SK-N-SH (cell line): ENCODE measurements at regions of chr9 and their contacts with region 1.

Region 1: DNA sequence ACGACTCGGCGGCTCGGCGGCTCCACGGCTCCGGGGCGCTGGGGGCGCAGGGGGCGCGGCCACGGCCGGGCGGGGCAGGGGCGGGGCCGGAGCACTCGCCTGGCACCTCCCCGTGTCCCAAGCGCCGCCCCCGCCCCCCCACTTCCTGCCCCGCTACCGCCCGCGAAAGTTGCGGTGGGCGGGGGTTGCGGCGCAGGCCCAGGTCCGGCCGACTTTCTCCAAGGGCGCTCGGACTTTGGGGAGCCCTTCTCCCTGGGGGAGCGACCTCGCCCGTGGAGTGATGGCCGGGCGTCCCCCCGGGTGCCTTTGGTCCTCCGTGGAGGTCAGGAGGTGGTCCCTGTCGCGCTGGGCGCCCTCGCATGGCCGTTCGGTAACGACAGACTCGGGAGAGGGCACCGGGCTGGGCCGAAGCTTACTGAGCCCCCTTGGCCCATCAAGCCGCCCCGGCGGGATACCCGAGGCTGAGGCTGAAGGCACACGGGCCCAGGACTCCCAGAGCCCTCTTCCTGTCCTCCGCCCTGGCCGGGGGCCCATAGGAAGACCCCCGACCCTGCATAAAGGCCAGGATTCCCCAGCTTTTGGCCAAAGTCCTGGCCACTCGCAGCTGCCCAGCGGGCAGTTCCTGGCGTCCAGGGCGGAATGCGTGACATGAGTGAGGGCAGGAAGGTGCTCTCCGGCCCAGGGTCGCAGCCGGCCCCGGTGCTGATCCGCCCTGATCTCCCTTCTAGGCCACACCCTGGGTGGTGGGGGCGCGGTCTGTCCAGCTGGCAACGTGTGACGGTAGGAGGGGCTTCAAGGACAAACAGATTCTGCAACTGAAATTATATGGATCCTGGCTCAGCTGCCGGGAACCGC is 883 bp upstream of the VAV2 start:
- DNase-seq: peak; percentile 94
- H3K4me3 ChIP-seq: peak overlapping the region; percentile 75 to 87
- H3K27ac ChIP-seq: peak overlapping the region; percentile 82 to 93
- H3K4me1 ChIP-seq: peaks cover 6 to 34% of the 10 kb centered on the region in 2 experiments; a peak in 3 of 4 replicates
- H3K27me3 ChIP-seq: no peaks in the 10 kb centered on the region
- CTCF ChIP-seq: peak; percentile 63
- EP300 ChIP-seq: no peak
- RAD21 ChIP-seq: peak; percentile 50

Region 2: DNA sequence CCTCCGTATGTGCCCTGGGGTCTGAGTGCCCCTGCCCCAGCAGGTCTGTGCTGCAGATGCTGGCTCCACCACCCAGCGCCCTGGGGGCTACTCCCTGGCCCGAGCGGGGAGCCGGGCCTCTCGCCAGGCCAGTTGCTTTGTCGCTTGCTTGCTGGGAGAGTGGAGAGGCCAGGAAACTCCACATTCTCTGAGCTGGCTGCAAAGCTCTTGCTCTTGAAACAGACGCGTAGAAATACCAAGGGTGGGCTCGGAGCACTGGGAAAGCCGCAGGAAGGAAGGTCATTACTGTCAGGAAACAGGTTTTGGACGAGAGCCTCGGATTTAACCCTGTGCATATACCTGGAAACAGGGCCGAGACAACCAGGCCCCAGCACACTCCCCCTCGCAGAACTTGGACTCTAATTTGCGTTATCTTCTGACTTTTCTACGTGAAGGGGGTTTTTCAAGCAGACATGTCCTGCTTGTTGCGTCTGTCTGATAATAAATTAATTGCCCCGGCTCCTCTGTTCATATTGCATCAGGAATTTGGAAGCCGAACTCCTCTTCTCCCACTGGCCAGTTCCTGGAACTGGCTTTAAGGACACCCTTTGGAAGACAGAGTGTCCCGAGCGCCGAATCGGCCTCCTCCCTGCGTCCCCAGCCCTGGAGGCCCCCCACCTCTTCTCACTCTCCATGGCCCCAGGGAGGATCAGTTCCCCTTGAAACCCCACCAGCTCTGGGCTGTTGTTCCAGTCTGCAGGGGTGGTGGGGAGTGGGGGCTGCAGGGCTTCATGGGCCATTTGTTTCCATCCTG is 447.3 kb before region 1 on chr9:
- CTCF ChIA-PET with region 1: no interaction called
- POLR2A ChIA-PET with region 1: no interaction called
- DNase-seq: peak; percentile 79
- H3K4me3 ChIP-seq: no peak overlapping the region
- H3K27ac ChIP-seq: peak overlapping the region in 1 of 2 experiments; percentile 80; a peak in 2 of 4 replicates
- H3K4me1 ChIP-seq: peaks cover 0 to 28% of the 10 kb centered on the region in 2 experiments; a peak in 1 of 4 replicates
- H3K27me3 ChIP-seq: no peaks in the 10 kb centered on the region
- CTCF ChIP-seq: no peak
- EP300 ChIP-seq: no peak
- RAD21 ChIP-seq: no peak

Region 3: GRCh38 chr9:133782157-133783130 is 210.6 kb before region 1 on chr9:
- CTCF ChIA-PET with region 1: interaction called, 236 read pairs
- POLR2A ChIA-PET with region 1: no interaction called
- DNase-seq: peak; percentile 90
- H3K4me3 ChIP-seq: no peak overlapping the region; a peak in 1 of 4 replicates
- H3K27ac ChIP-seq: peak overlapping the region in 1 of 2 experiments; percentile 64; a peak in 2 of 4 replicates
- H3K4me1 ChIP-seq: peaks cover 0 to 23% of the 10 kb centered on the region in 2 experiments; a peak in 1 of 4 replicates
- H3K27me3 ChIP-seq: no peaks in the 10 kb centered on the region
- CTCF ChIP-seq: peak; percentile 89
- EP300 ChIP-seq: no peak
- RAD21 ChIP-seq: peak; percentile 83

Region 4: GRCh38 chr9:133813749-133814585 is 179.0 kb before region 1 on chr9:
- CTCF ChIA-PET with region 1: interaction called, 53 read pairs
- POLR2A ChIA-PET with region 1: no interaction called
- DNase-seq: peak; percentile 85
- H3K4me3 ChIP-seq: no peak overlapping the region
- H3K27ac ChIP-seq: peak overlapping the region in 1 of 2 experiments; percentile 75; a peak in 2 of 4 replicates
- H3K4me1 ChIP-seq: peaks cover 0 to 23% of the 10 kb centered on the region in 2 experiments; a peak in 1 of 4 replicates
- H3K27me3 ChIP-seq: no peaks in the 10 kb centered on the region
- CTCF ChIP-seq: no peak
- EP300 ChIP-seq: 0 out of 4 replicates have a peak, but pooled peaks of 1 of the 2 experiments have one; percentile 56
- RAD21 ChIP-seq: no peak

Region 5: GRCh38 chr9:133862585-133863256 is 130.3 kb before region 1 on chr9:
- CTCF ChIA-PET with region 1: interaction called, 24 read pairs
- POLR2A ChIA-PET with region 1: no interaction called
- DNase-seq: no peak
- H3K4me3 ChIP-seq: no peak overlapping the region
- H3K27ac ChIP-seq: no peak overlapping the region; a peak in 1 of 4 replicates
- H3K4me1 ChIP-seq: peaks cover 0 to 23% of the 10 kb centered on the region in 2 experiments; a peak in 1 of 4 replicates
- H3K27me3 ChIP-seq: no peaks in the 10 kb centered on the region
- CTCF ChIP-seq: no peak
- EP300 ChIP-seq: no peak
- RAD21 ChIP-seq: no peak

Region 6: GRCh38 chr9:133889584-133890301 is 103.3 kb before region 1 on chr9:
- CTCF ChIA-PET with region 1: interaction called, 16 read pairs
- POLR2A ChIA-PET with region 1: no interaction called
- DNase-seq: no peak
- H3K4me3 ChIP-seq: no peak overlapping the region
- H3K27ac ChIP-seq: peak overlapping the region; percentile 58 to 85
- H3K4me1 ChIP-seq: peaks cover 13 to 63% of the 10 kb centered on the region in 2 experiments; a peak in 2 of 4 replicates
- H3K27me3 ChIP-seq: no peaks in the 10 kb centered on the region
- CTCF ChIP-seq: no peak
- EP300 ChIP-seq: no peak
- RAD21 ChIP-seq: no peak

Region 7: GRCh38 chr9:134007150-134007549 is 14.1 kb after region 1 on chr9:
- CTCF ChIA-PET with region 1: interaction called, 72 read pairs
- POLR2A ChIA-PET with region 1: interaction called, 3 read pairs
- DNase-seq: peak; percentile 84
- H3K4me3 ChIP-seq: no peak overlapping the region
- H3K27ac ChIP-seq: 0 out of 4 replicates have a peak overlapping the region, but pooled peaks of 1 of the 2 experiments have one; percentile 3
- H3K4me1 ChIP-seq: peaks cover 0 to 17% of the 10 kb centered on the region in 2 experiments; a peak in 1 of 4 replicates
- H3K27me3 ChIP-seq: no peaks in the 10 kb centered on the region
- CTCF ChIP-seq: no peak
- EP300 ChIP-seq: peak in 1 of 2 experiments; percentile 83; a peak in 2 of 4 replicates
- RAD21 ChIP-seq: no peak